H1 (cell line): ENCODE measurements at regions of chr11 and their contacts with region 1.

Region 1: DNA sequence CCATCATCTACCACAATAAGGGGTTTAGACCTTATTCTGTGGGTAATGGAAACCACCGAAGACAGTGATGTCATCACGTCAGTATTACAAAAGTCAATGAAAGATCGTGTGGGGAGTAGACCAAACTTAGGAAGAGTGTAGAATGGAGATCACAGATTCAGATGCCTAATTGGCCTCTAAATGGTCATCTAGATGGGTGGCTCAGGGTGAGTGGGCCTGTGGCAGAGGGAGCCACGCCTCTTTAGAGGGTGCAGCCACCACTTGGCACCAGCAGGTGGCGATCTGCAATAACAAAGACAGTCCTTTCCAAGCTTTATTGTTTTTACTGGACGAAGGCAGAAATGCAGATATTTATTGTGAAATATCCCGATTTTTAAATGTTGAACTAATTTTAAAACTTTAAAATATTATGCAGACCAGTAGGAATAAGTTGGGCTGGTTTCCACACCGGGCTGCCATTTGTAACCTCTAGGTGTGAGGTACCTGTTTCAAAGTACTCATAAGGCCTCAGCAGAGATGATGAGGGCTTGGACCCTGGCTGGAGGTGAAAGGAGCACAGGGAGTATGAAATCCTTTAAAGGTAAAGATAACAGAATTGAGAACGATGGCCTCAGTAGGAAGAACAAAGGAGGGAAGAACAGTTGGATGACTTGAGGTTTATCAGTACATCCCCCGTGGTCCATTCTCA is 222.0 kb downstream of the DBX1 start:
- DNase-seq: peak in 1 of 2 experiments; percentile 79
- H3K4me3 ChIP-seq: no peak overlapping the region
- H3K27ac ChIP-seq: no peak overlapping the region
- H3K4me1 ChIP-seq: peaks cover 2 to 11% (median 4%) of the 10 kb centered on the region in 4 experiments; a peak in 4 of 7 replicates
- H3K27me3 ChIP-seq: no peaks in the 10 kb centered on the region
- CTCF ChIP-seq: peak; percentile 65 to 94 (median 90)
- EP300 ChIP-seq: no peak
- POLR2A ChIP-seq: no peak
- RAD21 ChIP-seq: peak; percentile 68 to 69

Region 2: DNA sequence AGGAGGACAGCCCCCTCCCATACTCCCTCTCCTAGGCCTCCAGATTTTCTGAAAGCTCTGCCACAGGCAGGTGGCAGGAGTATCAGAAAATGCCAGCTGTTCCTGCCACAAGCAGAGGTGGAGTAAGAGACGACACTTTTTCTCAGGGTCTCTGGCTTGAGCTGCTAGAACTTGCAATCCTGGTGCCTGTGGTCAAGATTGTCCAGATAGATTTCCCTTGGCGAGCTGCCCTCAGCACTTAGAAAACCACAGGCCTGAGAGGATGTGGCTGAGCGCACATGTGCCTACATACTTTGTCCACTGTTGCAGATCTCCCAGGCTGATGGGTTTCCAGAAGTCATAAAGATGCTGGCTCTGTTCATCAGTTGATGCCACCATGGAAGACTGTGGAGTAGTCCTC is 291.4 kb before region 1 on chr11:
- CTCF ChIA-PET with region 1: no interaction called
- POLR2A ChIA-PET with region 1: no interaction called
- DNase-seq: no peak
- H3K4me3 ChIP-seq: no peak overlapping the region
- H3K27ac ChIP-seq: no peak overlapping the region
- H3K4me1 ChIP-seq: no peaks in the 10 kb centered on the region
- H3K27me3 ChIP-seq: no peaks in the 10 kb centered on the region
- CTCF ChIP-seq: no peak
- EP300 ChIP-seq: no peak
- POLR2A ChIP-seq: no peak
- RAD21 ChIP-seq: no peak

Region 3: DNA sequence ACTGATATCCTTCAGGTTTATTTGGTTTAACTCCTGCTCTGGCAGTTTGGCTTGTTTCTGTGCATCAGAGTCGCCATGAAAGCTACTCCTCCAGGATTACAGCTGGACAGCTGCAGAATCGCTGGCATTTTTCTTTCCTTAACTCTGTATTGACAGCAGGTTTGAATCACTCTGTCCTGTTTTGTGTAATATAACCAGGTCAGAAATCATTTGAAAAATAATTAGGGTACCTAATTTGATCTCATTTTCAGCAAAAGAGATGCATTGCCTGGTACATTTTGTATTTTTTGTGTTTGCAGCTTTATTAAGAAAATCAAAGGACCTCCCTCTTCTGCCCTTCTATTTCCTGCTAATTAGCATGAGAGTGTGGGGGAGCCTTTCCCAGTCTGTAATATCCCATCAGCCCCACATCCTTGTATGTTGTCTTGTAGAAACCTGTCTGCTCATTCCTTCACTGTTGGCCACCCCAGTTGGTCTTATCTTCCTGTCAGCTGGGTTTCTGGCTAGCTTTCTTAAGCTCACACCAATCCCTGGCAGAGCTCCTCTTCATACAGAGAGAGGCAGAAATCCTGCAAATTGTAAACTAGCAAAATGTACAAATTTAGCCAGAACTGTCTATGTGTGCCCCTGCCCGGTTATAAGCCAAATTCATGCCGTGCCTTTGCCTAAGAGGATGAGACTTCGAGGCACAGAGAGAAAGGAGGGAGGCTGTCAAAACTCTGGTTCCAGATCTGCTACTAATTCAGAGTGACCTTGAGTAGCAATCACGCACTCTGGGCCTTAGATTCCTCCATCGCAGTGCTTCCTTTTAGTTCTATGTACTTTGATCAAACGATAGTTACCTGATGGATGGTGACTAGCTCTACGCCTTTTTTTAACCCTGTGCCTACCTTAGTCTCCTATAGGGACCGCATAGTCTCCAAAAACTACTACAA is 25.1 kb before region 1 on chr11:
- CTCF ChIA-PET with region 1: interaction called, 11 read pairs
- POLR2A ChIA-PET with region 1: interaction called, 3 read pairs
- DNase-seq: no peak
- H3K4me3 ChIP-seq: no peak overlapping the region
- H3K27ac ChIP-seq: no peak overlapping the region
- H3K4me1 ChIP-seq: peaks cover 4 to 18% (median 15%) of the 10 kb centered on the region in 4 experiments
- H3K27me3 ChIP-seq: no peaks in the 10 kb centered on the region
- CTCF ChIP-seq: no peak
- EP300 ChIP-seq: no peak
- POLR2A ChIP-seq: no peak
- RAD21 ChIP-seq: no peak

Region 4: DNA sequence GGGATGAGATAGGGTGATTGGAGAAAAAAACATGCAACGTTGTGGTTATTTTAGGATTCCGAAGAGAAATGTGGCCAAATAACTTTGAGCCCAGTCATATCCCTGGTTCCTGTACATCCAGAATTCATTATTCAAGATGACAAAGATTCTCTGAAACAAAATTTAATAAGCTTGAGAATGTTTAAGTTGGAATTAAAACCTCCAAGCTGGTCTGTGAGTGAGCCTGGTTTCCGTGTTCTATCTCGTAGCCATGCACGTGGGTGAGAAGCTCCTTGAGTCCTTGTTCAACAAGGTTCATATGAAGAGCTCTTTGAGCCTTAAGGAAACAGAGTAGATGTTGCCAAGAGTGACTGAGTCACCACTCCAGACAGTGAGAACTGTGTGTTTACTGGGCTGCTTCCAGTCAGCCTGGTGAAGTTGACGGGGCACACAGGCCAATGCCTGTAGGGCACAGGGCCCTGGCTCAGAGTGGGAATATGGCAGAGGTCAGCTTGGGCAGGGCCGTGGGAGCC is 19.2 kb before region 1 on chr11:
- CTCF ChIA-PET with region 1: interaction called, 37 read pairs
- POLR2A ChIA-PET with region 1: interaction called, 3 read pairs
- DNase-seq: no peak
- H3K4me3 ChIP-seq: no peak overlapping the region
- H3K27ac ChIP-seq: no peak overlapping the region; the same call in 1 of the 2 replicates
- H3K4me1 ChIP-seq: no peaks in the 10 kb centered on the region; a peak in 1 of 7 replicates
- H3K27me3 ChIP-seq: no peaks in the 10 kb centered on the region
- CTCF ChIP-seq: no peak
- EP300 ChIP-seq: no peak
- POLR2A ChIP-seq: no peak
- RAD21 ChIP-seq: no peak

Region 5: DNA sequence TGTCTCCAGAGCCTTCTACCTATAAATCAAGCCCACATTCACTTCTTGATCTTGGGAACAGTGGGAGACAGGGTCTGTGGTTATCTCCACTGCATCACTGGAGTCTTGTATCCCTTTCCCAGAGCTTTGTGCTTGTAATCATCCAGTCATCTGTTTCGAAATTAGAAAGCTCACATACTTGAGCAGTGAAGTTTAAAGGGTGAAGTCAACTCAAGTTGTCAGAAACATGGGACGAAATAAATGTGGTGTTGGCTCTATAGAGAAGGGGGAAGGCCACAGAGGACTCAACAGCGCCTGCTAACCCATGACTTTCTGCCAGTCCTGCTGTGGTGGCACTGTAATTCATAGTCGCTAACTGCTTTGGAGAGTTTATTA is 24.5 kb after region 1 on chr11:
- CTCF ChIA-PET with region 1: interaction called, 14 read pairs
- POLR2A ChIA-PET with region 1: no interaction called
- DNase-seq: no peak
- H3K4me3 ChIP-seq: no peak overlapping the region
- H3K27ac ChIP-seq: no peak overlapping the region
- H3K4me1 ChIP-seq: no peaks in the 10 kb centered on the region; a peak in 1 of 7 replicates
- H3K27me3 ChIP-seq: no peaks in the 10 kb centered on the region
- CTCF ChIP-seq: no peak
- EP300 ChIP-seq: no peak
- POLR2A ChIP-seq: no peak
- RAD21 ChIP-seq: no peak